BJ (cell line): ENCODE measurements at regions of chr1 and their contacts with region 1.

Region 1: DNA sequence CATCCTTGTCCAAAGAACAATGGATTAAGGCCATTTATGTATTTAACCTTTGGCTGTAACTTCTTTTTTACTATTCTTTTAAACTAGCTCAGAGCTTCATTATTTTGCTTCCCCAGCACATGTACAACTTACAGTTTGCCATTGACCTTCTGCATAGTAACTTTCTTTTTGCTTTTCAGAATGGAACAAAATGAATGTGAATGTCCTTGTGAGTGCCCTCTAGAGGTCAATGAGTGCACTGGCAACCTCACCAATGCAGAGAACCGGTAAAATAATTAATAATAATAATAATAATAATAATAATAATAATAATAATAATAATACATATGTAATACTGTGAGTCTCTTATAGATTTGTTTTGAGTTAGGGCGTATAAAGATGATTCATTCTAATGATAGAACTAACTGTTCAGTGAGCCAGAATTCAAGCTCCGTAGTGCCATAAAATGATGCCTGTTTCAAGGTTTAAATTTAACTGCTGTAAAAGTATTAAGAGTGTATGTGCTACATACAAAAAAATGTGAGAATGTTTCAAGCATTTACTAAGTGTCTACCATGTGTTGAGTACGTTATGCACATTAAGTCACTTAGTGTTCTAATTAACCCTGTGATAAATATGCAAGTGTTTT is 69.0 kb upstream of the RAVER2 start:
- DNase-seq: no peak
- H3K4me3 ChIP-seq: no peak overlapping the region
- H3K27me3 ChIP-seq: no peaks in the 10 kb centered on the region
- CTCF ChIP-seq: peak; percentile 67

Region 2: GRCh38 chr1:64268653-64269557 is 406.9 kb before region 1 on chr1:
- CTCF ChIA-PET with region 1: interaction called, 24 read pairs
- POLR2A ChIA-PET with region 1: no interaction called
- DNase-seq: peak; percentile 33
- H3K4me3 ChIP-seq: no peak overlapping the region
- H3K27me3 ChIP-seq: no peaks in the 10 kb centered on the region; the same call in 1 of the 2 replicates
- CTCF ChIP-seq: peak; percentile 75

Region 3: GRCh38 chr1:64663668-64664067 is 12.2 kb before region 1 on chr1:
- CTCF ChIA-PET with region 1: interaction called, 24 read pairs
- POLR2A ChIA-PET with region 1: no interaction called
- DNase-seq: no peak
- H3K4me3 ChIP-seq: no peak overlapping the region
- H3K27me3 ChIP-seq: no peaks in the 10 kb centered on the region
- CTCF ChIP-seq: peak; percentile 19; the same call in 1 of the 2 replicates

Region 4: DNA sequence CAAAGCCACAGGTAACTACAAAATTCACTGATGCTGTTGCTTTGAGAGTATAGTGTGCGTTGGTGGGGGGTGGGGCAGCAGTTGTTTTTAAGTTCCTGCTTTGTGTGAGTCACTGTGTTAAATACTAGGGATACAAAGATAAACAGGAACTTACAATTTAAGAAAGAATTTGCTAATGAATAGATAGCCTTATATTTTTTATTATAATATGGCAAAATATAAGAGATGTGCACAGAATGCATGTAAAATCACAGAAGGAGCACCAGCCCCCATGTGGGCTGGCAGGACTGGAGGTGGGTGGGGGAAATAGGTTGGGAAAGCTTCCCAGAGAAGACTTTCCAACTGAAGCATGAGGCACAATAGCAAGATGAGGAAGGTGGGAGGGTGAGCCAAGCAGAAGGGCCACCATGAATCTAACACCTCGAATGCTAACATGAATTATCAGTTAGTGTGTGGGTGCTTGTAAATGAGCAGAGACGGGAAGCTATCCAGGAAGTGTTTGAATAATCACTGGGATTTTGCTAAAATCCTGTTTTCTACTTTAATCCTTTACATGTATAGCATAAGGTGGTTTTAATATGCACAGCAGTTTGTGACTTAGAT is 12.0 kb after region 1 on chr1:
- CTCF ChIA-PET with region 1: interaction called, 20 read pairs
- POLR2A ChIA-PET with region 1: no interaction called
- DNase-seq: no peak
- H3K4me3 ChIP-seq: no peak overlapping the region
- H3K27me3 ChIP-seq: no peaks in the 10 kb centered on the region
- CTCF ChIP-seq: no peak